K562 (cell line): ENCODE measurements at regions of chr12 and their contacts with region 1.

Region 1: GRCh38 chr12:121499929-121500793 is 80.7 kb downstream of the KDM2B start:
- DNase-seq: peak; percentile 82 to 92 (median 90)
- ATAC-seq: peak; percentile 96
- H3K4me3 ChIP-seq: no peak overlapping the region
- H3K27ac ChIP-seq: no peak overlapping the region
- H3K4me1 ChIP-seq: no peaks in the 10 kb centered on the region; a peak in 1 of 5 replicates
- H3K27me3 ChIP-seq: no peaks in the 10 kb centered on the region
- CTCF ChIP-seq: peak; percentile 90 to 93 (median 92)
- EP300 ChIP-seq: no peak
- POLR2A ChIP-seq: no peak
- RAD21 ChIP-seq: peak; percentile 58 to 81

Region 2: GRCh38 chr12:121543786-121544185 is 43.6 kb after region 1 on chr12:
- CTCF ChIA-PET with region 1: no interaction called
- POLR2A ChIA-PET with region 1: no interaction called
- in situ Hi-C with region 1: no loop called
- intact Hi-C with region 1: no loop called
- DNase-seq: no peak
- ATAC-seq: no peak
- H3K4me3 ChIP-seq: no peak overlapping the region
- H3K27ac ChIP-seq: no peak overlapping the region
- H3K4me1 ChIP-seq: peaks cover 0 to 7% of the 10 kb centered on the region in 2 experiments; a peak in 2 of 5 replicates
- H3K27me3 ChIP-seq: no peaks in the 10 kb centered on the region
- CTCF ChIP-seq: no peak
- EP300 ChIP-seq: no peak
- POLR2A ChIP-seq: no peak
- RAD21 ChIP-seq: no peak

Region 3: GRCh38 chr12:121668750-121669520 is 168.8 kb after region 1 on chr12:
- CTCF ChIA-PET with region 1: interaction called, 14 read pairs
- POLR2A ChIA-PET with region 1: no interaction called
- in situ Hi-C with region 1: no loop called
- intact Hi-C with region 1: no loop called
- DNase-seq: peak; percentile 40 to 57 (median 44)
- ATAC-seq: no peak
- H3K4me3 ChIP-seq: no peak overlapping the region
- H3K27ac ChIP-seq: no peak overlapping the region
- H3K4me1 ChIP-seq: peaks cover 2 to 36% of the 10 kb centered on the region in 2 experiments; a peak in 3 of 5 replicates
- H3K27me3 ChIP-seq: no peaks in the 10 kb centered on the region
- CTCF ChIP-seq: peak; percentile 60 to 76 (median 66)
- EP300 ChIP-seq: no peak
- POLR2A ChIP-seq: no peak
- RAD21 ChIP-seq: peak; percentile 45 to 62

Region 4: DNA sequence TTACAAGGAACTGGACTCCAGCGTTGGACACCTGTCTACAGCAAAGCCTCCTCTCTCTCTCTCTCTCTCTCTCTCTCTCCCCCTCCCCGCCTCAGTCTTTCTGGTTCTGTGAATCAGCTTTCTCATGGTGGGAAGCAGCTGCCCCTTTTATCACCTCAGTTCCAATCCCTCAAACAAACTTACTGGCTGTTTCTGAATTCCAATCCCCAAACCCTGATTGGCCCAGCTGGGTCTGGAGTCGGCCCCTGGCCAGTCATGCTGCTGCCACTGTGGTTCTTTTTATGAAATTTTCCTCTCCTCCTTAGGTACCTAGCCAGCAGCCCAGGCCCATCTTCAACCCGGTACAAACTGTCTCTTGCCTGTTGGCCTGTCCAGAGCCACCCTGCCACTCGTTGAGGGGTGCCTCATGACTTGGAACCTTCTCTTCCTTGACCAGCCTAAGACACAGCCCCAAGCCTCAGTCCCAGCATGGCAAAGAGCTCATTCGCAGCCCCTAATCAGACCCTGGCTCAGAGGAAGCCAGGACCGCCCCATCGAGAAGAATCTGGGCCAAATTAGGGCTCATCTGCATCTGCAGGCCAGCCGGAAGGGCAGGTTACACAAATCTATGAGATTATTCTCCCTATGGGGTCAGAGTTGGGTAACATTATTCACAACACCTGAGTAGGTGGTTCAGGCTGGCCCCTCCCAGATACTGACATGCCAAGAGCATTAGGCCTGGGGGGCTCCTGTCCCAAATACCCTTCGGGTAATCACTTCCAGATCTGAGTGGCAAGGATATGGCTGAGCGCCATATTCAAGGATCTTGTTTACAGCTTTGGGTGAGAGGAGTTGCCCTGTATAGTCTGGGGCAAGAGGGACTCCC is 178.8 kb after region 1 on chr12:
- CTCF ChIA-PET with region 1: interaction called, 26 read pairs
- POLR2A ChIA-PET with region 1: no interaction called
- in situ Hi-C with region 1: loop called (anchors 5 kb)
- intact Hi-C with region 1: loop called (anchors 2 kb)
- DNase-seq: peak in 3 of 4 experiments; percentile 27 to 36 (median 33)
- ATAC-seq: peak; percentile 46
- H3K4me3 ChIP-seq: no peak overlapping the region
- H3K27ac ChIP-seq: no peak overlapping the region
- H3K4me1 ChIP-seq: peaks cover 2 to 4% of the 10 kb centered on the region in 2 experiments; a peak in 2 of 5 replicates
- H3K27me3 ChIP-seq: no peaks in the 10 kb centered on the region
- CTCF ChIP-seq: no peak
- EP300 ChIP-seq: no peak
- POLR2A ChIP-seq: no peak
- RAD21 ChIP-seq: no peak